H1 (cell line): ENCODE measurements at regions of chr16 and their contacts with region 1.

Region 1: GRCh38 chr16:24041826-24042631 is 206.2 kb downstream of the PRKCB start:
- DNase-seq: peak; percentile 36 to 88
- H3K4me3 ChIP-seq: no peak overlapping the region
- H3K27ac ChIP-seq: no peak overlapping the region
- H3K4me1 ChIP-seq: peaks cover 0 to 12% (median 6%) of the 10 kb centered on the region in 4 experiments; a peak in 5 of 7 replicates
- H3K27me3 ChIP-seq: no peaks in the 10 kb centered on the region
- CTCF ChIP-seq: peak; percentile 73 to 83 (median 75)
- EP300 ChIP-seq: no peak
- POLR2A ChIP-seq: no peak
- RAD21 ChIP-seq: peak; percentile 89 to 90

Region 2: GRCh38 chr16:23952128-23952970 is 89.7 kb before region 1 on chr16:
- CTCF ChIA-PET with region 1: no interaction called
- POLR2A ChIA-PET with region 1: no interaction called
- DNase-seq: no peak
- H3K4me3 ChIP-seq: peak overlapping the region in 1 of 4 experiments; percentile 14; a peak in 1 of 8 replicates
- H3K27ac ChIP-seq: no peak overlapping the region
- H3K4me1 ChIP-seq: peaks cover 2 to 11% (median 5%) of the 10 kb centered on the region in 4 experiments; a peak in 4 of 7 replicates
- H3K27me3 ChIP-seq: no peaks in the 10 kb centered on the region
- CTCF ChIP-seq: no peak
- EP300 ChIP-seq: no peak
- POLR2A ChIP-seq: no peak
- RAD21 ChIP-seq: no peak

Region 3: DNA sequence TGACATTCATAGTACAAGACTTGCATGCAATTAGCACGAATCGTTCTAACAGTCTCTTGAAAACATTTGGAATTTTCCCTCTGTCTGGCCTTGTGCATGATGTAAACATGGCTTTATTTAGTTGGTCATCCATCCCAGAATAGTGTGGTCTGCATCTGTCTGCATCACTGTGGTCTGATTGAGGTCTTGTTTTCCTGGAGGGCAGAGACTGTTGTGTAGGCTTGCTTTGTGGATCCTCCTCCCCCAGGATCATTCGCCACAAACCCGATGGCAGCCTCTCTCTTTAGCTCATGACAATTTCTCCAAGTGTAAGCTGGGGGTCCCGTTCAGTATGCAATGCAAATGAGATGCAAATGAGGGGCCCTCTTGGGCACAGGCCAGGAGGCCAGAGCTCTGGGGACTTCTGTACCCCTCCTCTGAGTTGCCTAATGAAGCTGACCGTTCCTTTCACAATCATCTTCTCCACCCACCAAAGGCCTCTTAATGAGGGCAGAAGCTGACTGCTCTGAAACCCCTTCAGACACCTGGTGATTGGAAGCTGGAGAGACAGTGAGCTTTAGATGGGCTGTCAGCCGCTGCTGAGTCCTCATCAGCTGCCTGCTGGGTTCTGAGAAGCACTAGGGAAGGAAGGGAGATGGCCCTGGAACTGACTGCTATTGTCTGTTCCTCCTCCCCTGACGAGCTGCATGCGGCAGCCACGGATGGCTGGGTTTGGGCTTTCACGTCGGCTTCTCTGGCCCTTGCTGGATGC is 12.9 kb after region 1 on chr16:
- CTCF ChIA-PET with region 1: interaction called, 20 read pairs
- POLR2A ChIA-PET with region 1: no interaction called
- DNase-seq: peak in 1 of 2 experiments; percentile 56
- H3K4me3 ChIP-seq: peak overlapping the region in 1 of 4 experiments; percentile 16; a peak in 2 of 8 replicates
- H3K27ac ChIP-seq: peak overlapping the region; percentile 3; the same call in 1 of the 2 replicates
- H3K4me1 ChIP-seq: peaks cover 5 to 30% (median 12%) of the 10 kb centered on the region in 4 experiments
- H3K27me3 ChIP-seq: no peaks in the 10 kb centered on the region
- CTCF ChIP-seq: no peak
- EP300 ChIP-seq: no peak
- POLR2A ChIP-seq: no peak
- RAD21 ChIP-seq: peak in 1 of 2 experiments; percentile 9; a peak in 1 of 4 replicates

Region 4: DNA sequence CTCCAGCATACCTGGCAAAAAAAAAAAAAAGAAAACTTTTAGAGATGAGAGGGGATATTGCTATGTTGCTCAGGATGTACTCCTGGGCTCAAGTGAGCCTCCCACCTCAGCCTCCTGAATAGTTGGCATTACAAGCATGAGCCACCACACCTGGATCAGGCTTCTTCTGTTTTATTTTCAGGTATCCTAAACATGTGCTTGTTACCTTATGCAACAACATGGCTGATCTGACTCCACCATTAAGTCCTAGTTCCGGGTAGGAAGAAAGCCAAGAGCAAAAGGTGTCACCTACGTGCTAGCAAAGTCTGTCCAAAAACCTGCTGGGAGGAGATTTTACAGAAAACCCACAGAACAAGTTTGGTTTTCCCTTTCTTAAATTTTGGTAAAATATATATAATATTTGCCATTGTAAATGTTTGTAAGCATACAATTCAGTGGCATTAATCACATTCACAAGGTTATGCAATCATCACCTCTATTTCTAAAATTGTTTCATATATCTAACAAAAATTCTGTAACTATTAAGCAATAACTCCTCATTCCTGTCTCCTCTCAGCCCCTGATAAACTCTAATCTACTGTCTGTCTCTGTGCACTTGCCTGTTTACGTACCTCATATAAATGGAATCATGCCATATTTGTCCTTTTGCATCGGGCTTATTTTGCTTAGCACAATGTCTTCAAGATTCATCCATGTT is 205.0 kb after region 1 on chr16:
- CTCF ChIA-PET with region 1: interaction called, 104 read pairs
- POLR2A ChIA-PET with region 1: no interaction called
- DNase-seq: no peak
- H3K4me3 ChIP-seq: no peak overlapping the region
- H3K27ac ChIP-seq: no peak overlapping the region
- H3K4me1 ChIP-seq: no peaks in the 10 kb centered on the region
- H3K27me3 ChIP-seq: no peaks in the 10 kb centered on the region
- CTCF ChIP-seq: no peak
- EP300 ChIP-seq: no peak
- POLR2A ChIP-seq: no peak
- RAD21 ChIP-seq: no peak

Region 5: DNA sequence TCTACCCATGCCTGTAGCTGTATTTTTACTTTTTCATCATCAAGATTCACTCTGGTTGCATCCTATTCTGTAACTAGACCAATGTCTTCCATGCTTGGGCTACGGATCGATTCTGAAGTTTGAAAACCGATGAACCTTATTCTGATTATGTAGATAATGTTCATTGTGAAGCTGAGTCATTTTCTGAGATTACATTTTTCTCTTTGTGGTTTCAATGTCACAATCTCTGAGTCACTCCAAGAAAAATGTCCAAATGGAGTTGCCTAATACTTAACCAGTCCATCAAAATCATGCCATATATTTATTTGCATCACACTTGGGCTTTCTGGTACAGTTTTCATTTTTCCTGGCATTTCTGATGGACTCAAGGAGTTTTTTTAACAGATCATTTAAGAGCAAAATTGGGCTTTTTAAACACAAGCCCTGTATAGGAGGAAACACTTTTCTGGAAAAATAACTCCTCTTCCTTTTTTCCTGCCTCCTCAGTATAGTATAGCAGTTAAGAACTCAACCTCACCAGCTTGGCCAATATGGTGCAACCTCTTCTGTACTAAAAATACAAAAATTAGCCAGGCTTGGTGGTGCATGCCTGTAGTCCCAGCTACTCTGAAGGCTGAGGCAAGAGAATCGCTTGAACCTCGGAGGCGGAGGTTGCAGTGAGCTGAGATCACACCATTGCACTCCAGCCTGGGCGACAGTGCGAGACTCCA is 231.6 kb after region 1 on chr16:
- CTCF ChIA-PET with region 1: interaction called, 10 read pairs
- POLR2A ChIA-PET with region 1: no interaction called
- DNase-seq: no peak
- H3K4me3 ChIP-seq: no peak overlapping the region
- H3K27ac ChIP-seq: no peak overlapping the region
- H3K4me1 ChIP-seq: no peaks in the 10 kb centered on the region; a peak in 2 of 7 replicates
- H3K27me3 ChIP-seq: no peaks in the 10 kb centered on the region
- CTCF ChIP-seq: no peak
- EP300 ChIP-seq: no peak
- POLR2A ChIP-seq: no peak
- RAD21 ChIP-seq: no peak

Region 6: DNA sequence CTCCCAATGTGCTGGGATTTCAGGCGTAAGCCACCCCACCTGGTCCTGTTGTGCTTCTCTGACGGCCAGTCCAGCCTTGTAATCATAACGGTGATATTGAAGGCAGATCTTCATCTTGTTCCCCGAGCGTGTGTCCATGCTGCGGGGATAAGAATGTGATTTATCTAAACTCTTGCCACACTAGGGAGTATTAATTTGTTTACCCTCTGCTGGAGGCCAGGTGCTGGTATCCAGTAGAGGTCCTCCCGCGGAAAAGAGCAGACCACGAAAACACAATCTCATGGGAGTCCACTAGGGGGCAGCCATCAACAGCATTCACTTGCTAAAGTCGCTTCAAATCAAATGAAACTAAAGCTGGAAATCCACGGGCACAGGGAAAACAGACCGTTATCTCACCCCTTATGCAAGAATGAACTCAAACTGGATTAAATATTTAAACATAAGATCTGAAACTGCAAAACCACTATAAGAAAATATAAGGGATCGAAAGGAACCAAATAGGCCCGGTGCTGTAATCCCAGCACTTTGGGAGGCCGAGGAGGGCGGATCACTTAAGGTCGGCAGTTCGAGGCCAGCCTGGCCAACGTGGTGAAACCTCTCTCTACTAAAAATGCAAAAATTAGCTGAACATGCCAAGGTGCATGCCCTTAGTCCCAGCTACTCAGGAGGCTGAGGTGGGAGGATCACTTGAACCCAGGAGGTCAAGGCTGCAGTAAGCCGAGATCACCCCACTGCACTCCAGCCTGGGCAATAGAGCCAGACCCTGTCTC is 475.1 kb after region 1 on chr16:
- CTCF ChIA-PET with region 1: interaction called, 11 read pairs
- POLR2A ChIA-PET with region 1: no interaction called
- DNase-seq: peak; percentile 43 to 89
- H3K4me3 ChIP-seq: no peak overlapping the region
- H3K27ac ChIP-seq: no peak overlapping the region
- H3K4me1 ChIP-seq: no peaks in the 10 kb centered on the region
- H3K27me3 ChIP-seq: no peaks in the 10 kb centered on the region
- CTCF ChIP-seq: peak; percentile 73 to 97 (median 93)
- EP300 ChIP-seq: no peak
- POLR2A ChIP-seq: no peak
- RAD21 ChIP-seq: peak; percentile 82 to 87